ENCODE measurements at regions of chr15 and their contacts with region 1.

Region 1: DNA sequence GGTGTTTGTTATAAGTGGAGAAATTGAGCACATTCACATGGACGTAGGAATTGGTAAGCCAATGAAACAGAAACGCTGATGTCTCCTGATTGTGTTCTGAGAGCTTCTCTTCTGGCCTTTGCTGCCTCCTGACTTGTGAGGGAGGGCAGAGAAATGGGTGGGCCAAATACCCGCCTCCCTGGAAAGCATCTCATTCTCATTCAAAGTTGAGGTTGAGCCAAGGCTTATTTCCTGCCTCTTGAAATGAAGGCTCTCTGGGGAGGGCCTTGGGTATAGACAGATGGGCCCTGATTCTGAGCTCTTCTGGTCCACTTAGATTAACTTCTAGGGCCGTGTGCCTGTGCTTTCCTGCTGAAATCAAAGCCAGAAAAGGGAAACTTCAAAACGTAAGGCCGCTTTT is 57.4 kb upstream of the MYZAP start:
- DNase-seq: no peak
- CTCF ChIP-seq: no peak

Region 2: GRCh38 chr15:57337868-57338411 is 196.3 kb before region 1 on chr15:
- in situ Hi-C with region 1: loop called (anchors 5 kb)
- DNase-seq: no peak
- CTCF ChIP-seq: no peak

Measured in GM13976 (cell line).